ENCODE measurements at regions of chr14 and their contacts with region 1.

Region 1: DNA sequence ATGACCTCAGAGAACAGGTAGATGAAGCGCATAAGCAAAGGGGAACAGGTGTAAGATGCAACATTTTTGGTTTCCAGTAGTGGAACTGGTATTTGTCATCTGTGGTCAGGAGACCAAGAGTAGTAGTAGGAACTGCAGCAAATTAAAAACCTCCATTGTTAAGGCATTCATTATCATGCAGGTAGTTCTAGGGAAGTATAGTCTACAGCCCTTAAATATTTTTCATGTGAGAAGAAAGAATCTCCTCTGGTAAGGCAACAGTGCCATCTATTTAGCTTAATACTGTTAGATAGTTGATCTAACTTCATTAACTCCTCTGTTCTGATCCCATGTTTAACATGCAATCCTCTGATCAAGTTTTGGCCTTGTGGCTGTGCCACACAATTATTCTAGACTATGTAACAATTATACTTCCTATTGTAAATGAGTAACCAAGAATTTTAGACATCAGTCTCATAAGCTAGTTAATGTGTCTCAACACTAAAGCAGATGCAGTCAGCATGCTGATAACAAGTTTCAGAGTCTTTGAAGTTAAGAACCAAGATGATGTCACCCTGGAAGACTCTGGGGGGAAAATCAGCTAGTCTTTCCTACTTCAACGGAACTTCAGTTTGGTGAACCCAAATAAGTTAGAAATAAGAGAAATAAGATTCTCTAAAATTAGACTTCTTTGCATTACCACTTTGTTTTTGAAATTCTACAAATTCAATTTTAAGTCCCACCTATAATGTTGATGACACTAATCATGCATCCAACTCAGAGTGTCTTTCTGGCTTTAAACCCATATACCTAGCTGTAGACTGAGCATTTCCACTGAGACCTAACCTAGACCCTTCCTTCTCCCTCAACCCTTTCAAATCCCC is 70.9 kb downstream of the STXBP6 start:
- DNase-seq: peak; percentile 46
- ATAC-seq: peak; percentile 81
- H3K4me3 ChIP-seq: no peak overlapping the region
- H3K27ac ChIP-seq: peak overlapping the region; percentile 18; the same call in 1 of the 2 replicates
- H3K4me1 ChIP-seq: peaks cover 5% of the 10 kb centered on the region; the same call in 1 of the 2 replicates
- H3K27me3 ChIP-seq: no peaks in the 10 kb centered on the region
- CTCF ChIP-seq: no peak
- EP300 ChIP-seq: peak; percentile 21 to 66; a peak in 2 of 4 replicates
- POLR2A ChIP-seq: no peak
- RAD21 ChIP-seq: no peak

Region 2: DNA sequence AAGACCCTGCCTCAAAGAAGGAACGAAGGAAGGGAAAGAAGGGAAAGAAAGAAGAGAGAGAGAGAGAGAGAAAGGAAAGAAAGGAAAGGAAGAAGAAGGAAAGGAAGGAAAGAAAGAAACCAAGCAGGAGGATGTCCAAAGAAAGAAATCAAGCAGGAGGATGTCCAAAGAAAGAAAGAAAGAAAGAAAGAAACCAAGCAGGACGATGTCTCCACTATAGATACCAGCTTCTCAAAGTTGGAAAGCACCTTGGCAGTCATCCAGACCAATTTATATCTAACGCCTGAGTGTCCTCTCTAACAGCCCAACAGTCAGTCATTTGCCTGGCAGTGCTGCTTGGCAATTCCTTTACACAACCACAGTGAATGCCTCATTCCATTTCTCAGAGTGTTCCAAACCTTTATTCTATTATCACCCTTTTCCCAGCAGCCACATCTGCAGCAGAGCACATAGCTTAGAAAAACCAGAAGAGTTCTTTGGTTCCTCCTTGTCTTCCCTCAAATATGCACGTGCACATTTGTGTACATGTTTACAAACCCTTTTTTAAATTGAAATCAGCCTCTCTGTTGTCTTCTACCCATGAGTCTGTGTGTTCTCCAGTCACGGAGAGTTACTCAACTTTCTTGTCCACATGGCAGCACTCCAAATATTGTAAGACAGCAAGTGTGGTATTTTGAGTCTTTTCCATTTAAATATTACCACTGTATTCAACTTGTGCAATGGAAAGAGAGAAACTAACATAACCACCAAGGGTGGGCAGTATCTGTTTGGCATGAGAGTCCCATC is 67.6 kb before region 1 on chr14:
- CTCF ChIA-PET with region 1: interaction called, 4 read pairs
- POLR2A ChIA-PET with region 1: interaction called, 3 read pairs
- RAD21 ChIA-PET with region 1: interaction called, 14 read pairs
- SMC1A ChIA-PET with region 1: interaction called, 25 read pairs
- in situ Hi-C with region 1: no loop called
- intact Hi-C with region 1: no loop called
- DNase-seq: peak; percentile 27
- ATAC-seq: peak; percentile 71
- H3K4me3 ChIP-seq: no peak overlapping the region
- H3K27ac ChIP-seq: no peak overlapping the region
- H3K4me1 ChIP-seq: no peaks in the 10 kb centered on the region
- H3K27me3 ChIP-seq: no peaks in the 10 kb centered on the region
- CTCF ChIP-seq: no peak
- EP300 ChIP-seq: no peak
- POLR2A ChIP-seq: no peak
- RAD21 ChIP-seq: no peak

Region 3: GRCh38 chr14:24952851-24953666 is 26.0 kb before region 1 on chr14:
- CTCF ChIA-PET with region 1: interaction called, 21 read pairs
- POLR2A ChIA-PET with region 1: interaction called, 13 read pairs
- RAD21 ChIA-PET with region 1: interaction called, 72 read pairs
- SMC1A ChIA-PET with region 1: interaction called, 390 read pairs
- in situ Hi-C with region 1: no loop called
- intact Hi-C with region 1: loop called (anchors 1 kb)
- DNase-seq: no peak
- ATAC-seq: peak; percentile 32
- H3K4me3 ChIP-seq: no peak overlapping the region
- H3K27ac ChIP-seq: no peak overlapping the region
- H3K4me1 ChIP-seq: peaks cover 6% of the 10 kb centered on the region
- H3K27me3 ChIP-seq: no peaks in the 10 kb centered on the region
- CTCF ChIP-seq: peak in 2 of 3 experiments; percentile 10 to 30; a peak in 2 of 6 replicates
- EP300 ChIP-seq: no peak
- POLR2A ChIP-seq: no peak
- RAD21 ChIP-seq: no peak

Region 4: GRCh38 chr14:24965934-24966578 is 13.0 kb before region 1 on chr14:
- CTCF ChIA-PET with region 1: interaction called, 8 read pairs
- POLR2A ChIA-PET with region 1: interaction called, 13 read pairs
- RAD21 ChIA-PET with region 1: interaction called, 21 read pairs
- SMC1A ChIA-PET with region 1: interaction called, 390 read pairs
- in situ Hi-C with region 1: no loop called
- intact Hi-C with region 1: no loop called
- DNase-seq: no peak
- ATAC-seq: peak; percentile 69
- H3K4me3 ChIP-seq: no peak overlapping the region
- H3K27ac ChIP-seq: no peak overlapping the region
- H3K4me1 ChIP-seq: no peaks in the 10 kb centered on the region
- H3K27me3 ChIP-seq: no peaks in the 10 kb centered on the region
- CTCF ChIP-seq: no peak
- EP300 ChIP-seq: 0 out of 4 replicates have a peak, but pooled peaks of 1 of the 2 experiments have one; percentile 9
- POLR2A ChIP-seq: no peak
- RAD21 ChIP-seq: no peak

Region 5: DNA sequence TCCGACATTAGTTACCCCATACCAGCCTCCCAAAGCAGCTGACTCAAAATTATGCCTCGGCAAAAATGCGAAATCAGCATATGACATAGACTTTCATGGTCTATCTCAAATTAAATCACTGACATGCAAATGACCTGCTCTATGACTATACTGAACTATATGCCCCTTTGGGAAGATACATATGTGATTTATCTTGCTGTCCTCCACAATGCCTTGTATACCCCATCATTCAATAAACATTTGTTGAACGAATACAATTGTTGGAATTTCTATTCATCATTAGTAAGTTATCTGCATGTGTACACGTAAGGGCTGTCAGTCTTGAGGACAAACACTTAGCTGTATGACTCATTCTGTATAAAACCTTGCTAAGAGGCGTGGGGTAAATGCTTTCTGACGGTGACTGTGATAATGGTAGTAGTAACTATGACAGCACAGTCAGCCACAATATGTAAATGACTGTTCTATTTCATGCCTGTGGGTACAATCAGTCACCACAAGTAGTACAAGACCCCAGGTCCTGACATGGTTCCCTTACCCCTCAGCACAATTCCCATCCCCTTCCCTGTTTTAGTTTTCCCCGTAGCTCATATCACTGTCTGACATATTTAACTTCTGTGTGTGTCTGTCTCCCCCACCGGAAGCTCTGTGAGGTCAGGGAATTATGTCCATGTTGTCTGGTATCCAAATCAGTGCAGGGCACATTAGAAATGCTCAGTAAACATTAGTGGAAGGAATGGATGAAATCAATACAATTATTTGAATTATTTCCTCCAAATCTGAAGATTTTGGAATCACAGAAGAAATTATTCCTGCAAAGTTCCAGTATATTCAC is 28.1 kb after region 1 on chr14:
- CTCF ChIA-PET with region 1: interaction called, 11 read pairs
- POLR2A ChIA-PET with region 1: no interaction called
- RAD21 ChIA-PET with region 1: interaction called, 32 read pairs
- SMC1A ChIA-PET with region 1: interaction called, 118 read pairs
- in situ Hi-C with region 1: no loop called
- intact Hi-C with region 1: loop called (anchors 1 kb)
- DNase-seq: no peak
- ATAC-seq: peak; percentile 70
- H3K4me3 ChIP-seq: no peak overlapping the region
- H3K27ac ChIP-seq: no peak overlapping the region
- H3K4me1 ChIP-seq: no peaks in the 10 kb centered on the region
- H3K27me3 ChIP-seq: no peaks in the 10 kb centered on the region
- CTCF ChIP-seq: no peak
- EP300 ChIP-seq: peak; percentile 56 to 84; a peak in 3 of 4 replicates
- POLR2A ChIP-seq: no peak
- RAD21 ChIP-seq: no peak

Region 6: DNA sequence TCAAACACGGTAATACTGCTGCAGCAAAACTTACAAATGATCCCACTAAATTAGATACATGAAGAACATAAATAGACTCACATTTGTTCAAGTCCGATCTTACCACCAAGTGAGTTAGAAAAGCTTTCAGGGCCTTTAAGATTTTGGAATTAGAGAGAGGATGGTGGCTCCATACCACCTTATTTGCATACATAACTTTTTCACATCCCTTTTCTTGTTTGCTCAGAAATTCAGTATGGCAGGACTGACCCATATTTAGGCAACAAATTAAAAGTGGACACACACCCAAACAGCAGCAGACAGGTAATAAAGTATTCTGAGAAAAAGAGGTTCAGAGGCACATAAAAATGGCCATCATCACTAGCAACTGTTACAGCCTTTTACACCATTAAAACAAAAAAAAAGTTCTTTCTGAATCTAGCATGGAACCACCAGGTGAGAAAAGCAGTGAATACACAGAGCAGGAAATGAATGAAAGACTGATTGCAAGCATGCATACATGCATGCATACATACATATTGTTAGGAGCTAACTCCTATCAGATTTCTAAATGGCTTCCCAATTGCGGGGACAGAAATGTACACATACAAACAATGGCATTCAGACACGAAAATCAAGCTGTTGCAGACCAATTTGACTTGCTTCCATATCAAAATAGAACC is 47.5 kb after region 1 on chr14:
- CTCF ChIA-PET with region 1: interaction called, 23 read pairs
- POLR2A ChIA-PET with region 1: interaction called, 5 read pairs
- RAD21 ChIA-PET with region 1: interaction called, 26 read pairs
- SMC1A ChIA-PET with region 1: interaction called, 46 read pairs
- in situ Hi-C with region 1: no loop called
- intact Hi-C with region 1: no loop called
- DNase-seq: peak; percentile 15
- ATAC-seq: peak; percentile 84
- H3K4me3 ChIP-seq: no peak overlapping the region
- H3K27ac ChIP-seq: no peak overlapping the region
- H3K4me1 ChIP-seq: no peaks in the 10 kb centered on the region
- H3K27me3 ChIP-seq: no peaks in the 10 kb centered on the region
- CTCF ChIP-seq: no peak
- EP300 ChIP-seq: peak in 1 of 2 experiments; percentile 24; a peak in 2 of 4 replicates
- POLR2A ChIP-seq: no peak
- RAD21 ChIP-seq: no peak

Region 7: DNA sequence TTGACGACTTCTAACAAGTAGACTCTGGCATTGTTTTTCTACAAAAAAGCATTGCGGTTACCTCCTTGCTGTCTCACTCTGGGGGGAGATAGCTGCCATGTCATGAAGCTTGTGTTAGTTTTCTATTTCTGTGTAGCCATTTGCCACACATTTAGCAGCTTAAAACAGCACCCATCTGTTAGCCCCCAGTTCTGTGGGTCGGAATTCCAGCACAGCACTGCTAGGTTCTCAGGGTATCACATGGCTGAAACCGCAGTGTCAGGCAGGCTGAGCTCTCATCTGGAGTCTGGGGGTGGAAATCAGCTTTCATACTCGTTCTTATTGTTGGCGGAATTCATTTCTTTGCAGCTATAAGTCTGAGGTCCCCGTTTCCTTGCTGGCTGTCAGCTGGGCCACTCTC is 90.8 kb after region 1 on chr14:
- CTCF ChIA-PET with region 1: no interaction called
- POLR2A ChIA-PET with region 1: no interaction called
- RAD21 ChIA-PET with region 1: no interaction called
- SMC1A ChIA-PET with region 1: no interaction called
- in situ Hi-C with region 1: no loop called
- intact Hi-C with region 1: no loop called
- DNase-seq: no peak
- ATAC-seq: no peak
- H3K4me3 ChIP-seq: no peak overlapping the region
- H3K27ac ChIP-seq: no peak overlapping the region
- H3K4me1 ChIP-seq: no peaks in the 10 kb centered on the region
- H3K27me3 ChIP-seq: no peaks in the 10 kb centered on the region
- CTCF ChIP-seq: no peak
- EP300 ChIP-seq: no peak
- POLR2A ChIP-seq: no peak
- RAD21 ChIP-seq: no peak

Region 8: DNA sequence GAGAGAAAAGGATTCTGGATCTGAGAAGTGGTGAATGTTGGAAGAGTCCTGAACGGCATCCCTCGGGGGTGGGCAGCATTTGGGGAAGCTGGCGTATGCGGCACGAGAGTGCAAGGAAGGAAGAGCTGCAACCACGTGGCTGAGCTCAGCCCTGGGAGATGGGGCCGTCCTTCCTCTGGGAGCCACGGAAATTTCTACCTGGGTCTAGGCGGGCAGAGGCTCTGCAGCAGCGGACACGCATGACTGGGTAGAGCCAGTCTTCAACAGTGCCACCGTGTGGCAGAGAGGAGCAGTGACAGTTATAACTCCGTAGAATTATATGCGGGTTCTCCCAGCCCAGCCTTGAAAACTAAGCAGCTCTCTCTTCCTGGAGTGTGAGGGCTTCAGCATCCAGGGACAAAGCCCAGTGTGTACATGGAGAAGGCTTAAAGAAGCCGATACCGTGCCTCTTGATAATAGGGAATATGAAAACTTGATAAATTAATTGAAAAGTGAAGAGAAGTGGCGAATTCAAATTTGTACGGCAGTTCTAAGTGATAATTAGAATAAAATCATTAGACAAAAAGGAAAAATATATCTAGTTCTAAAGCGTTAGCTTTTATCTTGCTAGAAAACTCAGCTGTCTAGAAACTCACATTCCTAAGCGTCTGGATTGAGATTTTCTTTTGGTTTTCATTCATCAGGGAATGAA is 153.8 kb after region 1 on chr14:
- CTCF ChIA-PET with region 1: interaction called, 6 read pairs
- POLR2A ChIA-PET with region 1: no interaction called
- RAD21 ChIA-PET with region 1: interaction called, 19 read pairs
- SMC1A ChIA-PET with region 1: interaction called, 5 read pairs
- in situ Hi-C with region 1: no loop called
- intact Hi-C with region 1: no loop called
- DNase-seq: no peak
- ATAC-seq: peak; percentile 97
- H3K4me3 ChIP-seq: no peak overlapping the region
- H3K27ac ChIP-seq: no peak overlapping the region
- H3K4me1 ChIP-seq: no peaks in the 10 kb centered on the region
- H3K27me3 ChIP-seq: no peaks in the 10 kb centered on the region
- CTCF ChIP-seq: peak; percentile 76 to 79 (median 76)
- EP300 ChIP-seq: no peak
- POLR2A ChIP-seq: no peak
- RAD21 ChIP-seq: peak; percentile 57

Measured in GM12878 (cell line).